ENCODE measurements at regions of chr16 and their contacts with region 1.

Region 1: GRCh38 chr16:30091474-30092372 is at the start of gene TBX6:
- DNase-seq: peak; percentile 90
- H3K4me3 ChIP-seq: peak within 1 kb of the TSS; percentile 32 to 43
- H3K27ac ChIP-seq: peak within 1 kb of the TSS; percentile 48 to 78
- H3K4me1 ChIP-seq: peaks cover 20% of the 10 kb centered on the region
- H3K27me3 ChIP-seq: no peaks in the 10 kb centered on the region
- CTCF ChIP-seq: peak; percentile 74 to 99 (median 92)
- POLR2A ChIP-seq: peak; percentile 20
- total RNA-seq, gene TBX6: 1.5 to 2.5 TPM

Region 2: DNA sequence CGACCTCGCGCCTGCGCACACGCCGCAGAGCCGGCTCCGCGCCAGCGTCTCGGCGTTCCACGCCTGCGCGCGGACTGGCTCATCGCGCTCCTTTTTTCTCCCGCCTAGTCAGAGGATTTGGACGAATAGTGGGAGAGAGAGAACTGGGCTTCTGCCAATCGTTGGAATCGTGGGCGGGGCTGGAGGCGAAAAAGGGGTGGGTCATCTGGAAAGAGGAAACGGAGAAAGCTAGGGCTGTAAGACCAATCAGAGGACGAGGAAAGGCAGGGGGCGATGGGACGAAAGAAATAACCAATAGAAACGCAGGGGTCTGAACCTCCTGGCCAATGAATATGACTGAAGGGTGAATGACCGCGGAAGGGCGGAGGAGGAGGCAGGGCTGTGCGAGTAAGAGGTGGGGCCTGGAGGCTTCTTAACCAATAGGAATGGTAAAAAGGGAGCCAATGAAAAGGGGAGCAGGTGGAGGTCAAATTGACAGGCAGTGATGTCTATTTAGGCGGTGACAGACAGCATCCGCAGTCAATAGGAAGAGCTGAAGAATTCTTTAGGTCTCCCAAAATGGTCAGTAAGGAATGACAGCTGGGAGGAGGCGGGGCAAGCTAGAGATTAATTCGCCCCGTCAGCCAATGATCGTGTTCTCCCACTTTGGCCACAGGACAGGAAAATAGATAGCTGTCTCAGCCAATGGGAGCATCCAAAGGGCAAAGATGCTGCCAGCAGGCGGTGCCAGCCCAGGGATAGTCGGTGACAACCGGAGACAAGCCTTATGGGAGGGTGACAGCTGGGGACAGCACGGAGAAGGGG is 278.9 kb after region 1 on chr16 and contains the start of gene TBC1D10B:
- intact Hi-C with region 1: loop called (anchors 10 kb)
- DNase-seq: peak; percentile 99
- H3K4me3 ChIP-seq: peak within 1 kb of the TSS; percentile 68 to 83
- H3K27ac ChIP-seq: peak within 1 kb of the TSS; percentile 89 to 90
- H3K4me1 ChIP-seq: peaks cover 19% of the 10 kb centered on the region
- H3K27me3 ChIP-seq: no peaks in the 10 kb centered on the region
- CTCF ChIP-seq: peak in 2 of 4 experiments; percentile 43 to 75
- POLR2A ChIP-seq: peak; percentile 78
- total RNA-seq, gene TBC1D10B: 40.3 to 59.4 TPM

Region 3: DNA sequence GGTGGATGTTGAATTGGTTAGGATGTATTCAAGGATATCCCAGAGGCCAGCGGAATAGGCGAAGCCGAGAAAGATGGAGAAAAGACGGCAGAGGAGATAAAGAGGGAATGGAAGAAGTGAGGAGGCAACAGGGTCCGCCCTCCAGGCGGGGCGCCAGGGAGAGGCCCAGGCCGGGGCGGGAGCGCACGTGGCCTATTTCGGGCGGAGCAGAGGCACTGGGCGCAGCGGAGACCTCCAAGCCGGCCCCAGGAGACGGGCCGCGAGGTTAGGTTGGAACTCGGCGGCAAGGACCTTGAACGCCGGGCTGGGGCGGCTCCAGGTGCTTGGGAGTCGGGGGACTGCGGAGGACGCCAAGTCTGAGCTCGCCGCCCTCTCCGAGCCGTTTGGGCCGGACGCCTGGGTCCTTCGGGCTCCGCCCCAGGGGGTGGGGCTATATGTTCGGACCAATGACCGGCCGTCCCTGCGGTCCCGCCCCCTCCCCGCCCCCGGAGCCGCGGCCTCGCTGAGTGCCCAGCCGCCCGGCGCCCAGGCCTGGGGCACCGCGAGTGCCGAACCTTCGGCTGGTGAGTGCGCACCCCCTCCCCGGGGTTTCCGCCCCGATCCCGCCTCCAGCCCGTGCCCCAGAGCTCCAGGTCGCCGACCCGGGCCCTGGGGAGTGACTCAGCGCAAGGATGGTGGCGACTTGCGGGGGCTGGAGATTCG is 315.5 kb after region 1 on chr16 and contains the start of gene ZNF771:
- intact Hi-C with region 1: loop called (anchors 10 kb)
- DNase-seq: peak; percentile 92
- H3K4me3 ChIP-seq: peak within 1 kb of the TSS; percentile 69 to 75
- H3K27ac ChIP-seq: peak within 1 kb of the TSS; percentile 76 to 85
- H3K4me1 ChIP-seq: peaks cover 2% of the 10 kb centered on the region
- H3K27me3 ChIP-seq: no peaks in the 10 kb centered on the region
- CTCF ChIP-seq: peak in 1 of 4 experiments; percentile 24
- POLR2A ChIP-seq: peak; percentile 55
- total RNA-seq, gene ZNF771: 32.3 to 36.3 TPM